ENCODE measurements at regions of chr11 and their contacts with region 1.

Region 1: GRCh38 chr11:117107701-117108590 is 9.7 kb upstream of the SIK3 start:
- DNase-seq: no peak
- ATAC-seq: no peak
- H3K4me3 Mint-ChIP-seq: no peak overlapping the region
- H3K27ac Mint-ChIP-seq: no peak overlapping the region
- H3K4me1 Mint-ChIP-seq: peaks cover 5% of the 10 kb centered on the region
- H3K27me3 Mint-ChIP-seq: peaks cover 2% of the 10 kb centered on the region

Region 2: GRCh38 chr11:116853461-116854073 is 254.4 kb before region 1 on chr11:
- CTCF ChIA-PET with region 1: interaction called, 11 read pairs
- POLR2A ChIA-PET with region 1: no interaction called
- DNase-seq: peak; percentile 83
- ATAC-seq: peak; percentile 95
- H3K4me3 Mint-ChIP-seq: peak overlapping the region; percentile 35
- H3K27ac Mint-ChIP-seq: peak overlapping the region; percentile 93
- H3K4me1 Mint-ChIP-seq: peaks cover 65% of the 10 kb centered on the region
- H3K27me3 Mint-ChIP-seq: no peaks in the 10 kb centered on the region

Region 3: GRCh38 chr11:116890193-116890592 is 217.8 kb before region 1 on chr11:
- CTCF ChIA-PET with region 1: interaction called, 13 read pairs
- POLR2A ChIA-PET with region 1: no interaction called
- DNase-seq: peak; percentile 47
- ATAC-seq: peak; percentile 74
- H3K4me3 Mint-ChIP-seq: no peak overlapping the region
- H3K27ac Mint-ChIP-seq: peak overlapping the region; percentile 69
- H3K4me1 Mint-ChIP-seq: peaks cover 16% of the 10 kb centered on the region
- H3K27me3 Mint-ChIP-seq: no peaks in the 10 kb centered on the region

Region 4: DNA sequence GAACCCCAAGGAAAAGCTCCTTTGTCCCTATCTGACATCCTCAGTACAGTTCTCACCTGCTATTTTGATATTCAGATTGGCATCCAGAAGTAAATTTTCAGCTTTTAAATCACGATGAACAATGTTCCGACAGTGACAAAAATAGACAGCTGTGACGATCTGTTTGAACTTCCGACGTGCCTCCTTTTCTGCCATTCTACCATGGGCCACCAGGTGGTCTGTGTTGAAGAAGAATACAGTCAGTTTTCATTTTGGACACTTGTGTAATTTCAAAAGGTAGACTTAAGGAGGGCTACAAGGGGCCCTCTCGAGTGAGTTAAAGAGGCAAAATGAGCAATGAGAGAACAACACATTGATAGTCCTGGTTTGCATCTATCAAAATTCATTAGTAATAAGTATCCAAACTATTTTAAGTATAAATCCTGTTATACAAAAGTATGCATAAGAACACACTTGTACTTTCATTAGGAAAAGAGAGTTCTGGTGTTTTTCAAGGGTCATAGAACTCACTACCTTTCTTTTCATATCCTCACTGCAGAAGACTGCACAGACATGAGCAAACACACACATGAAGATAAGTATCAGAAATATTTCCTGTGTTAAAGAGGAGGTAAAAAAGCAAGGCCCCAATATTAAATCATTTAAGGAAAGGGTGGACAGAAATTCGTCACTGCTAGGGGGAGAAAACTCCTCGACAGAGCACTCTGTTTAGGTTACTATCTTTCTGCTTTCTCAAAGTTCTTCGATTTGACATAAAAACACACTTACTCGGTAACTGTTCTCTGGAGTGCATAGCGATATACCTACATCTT is 180.6 kb before region 1 on chr11:
- CTCF ChIA-PET with region 1: interaction called, 12 read pairs
- POLR2A ChIA-PET with region 1: no interaction called
- DNase-seq: peak; percentile 66
- ATAC-seq: peak; percentile 28
- H3K4me3 Mint-ChIP-seq: peak overlapping the region; percentile 48
- H3K27ac Mint-ChIP-seq: peak overlapping the region; percentile 73
- H3K4me1 Mint-ChIP-seq: peaks cover 82% of the 10 kb centered on the region
- H3K27me3 Mint-ChIP-seq: no peaks in the 10 kb centered on the region

Region 5: DNA sequence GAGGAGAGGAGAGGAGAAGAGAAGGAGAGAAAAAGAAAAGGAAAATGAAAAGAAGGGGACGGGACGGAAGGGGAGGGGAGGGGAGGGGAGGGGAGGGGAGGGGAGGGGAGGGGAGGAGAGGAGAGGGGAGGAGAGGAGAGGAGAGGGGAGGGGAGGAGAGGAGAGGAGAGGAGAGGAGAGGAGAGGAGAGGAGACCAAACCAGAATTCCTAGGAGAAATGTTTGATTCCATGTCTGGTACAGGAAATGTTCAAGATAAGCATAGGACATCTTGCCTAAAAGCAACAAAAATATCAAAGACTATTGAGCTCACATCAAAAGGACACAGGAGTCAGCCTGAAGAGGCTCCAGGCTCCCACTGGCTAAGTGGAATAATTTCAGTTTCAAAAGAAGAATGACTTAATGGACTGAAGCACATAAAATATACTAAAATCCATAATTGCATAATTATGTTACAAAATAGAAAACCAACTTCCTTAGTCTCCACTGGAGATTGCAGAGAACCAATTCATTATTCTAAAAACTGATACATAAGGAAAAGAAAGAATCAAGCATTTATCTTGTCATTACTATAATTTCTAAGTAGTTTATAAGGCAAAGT is 169.4 kb before region 1 on chr11:
- CTCF ChIA-PET with region 1: no interaction called
- POLR2A ChIA-PET with region 1: no interaction called
- DNase-seq: no peak
- ATAC-seq: no peak
- H3K4me3 Mint-ChIP-seq: no peak overlapping the region
- H3K27ac Mint-ChIP-seq: no peak overlapping the region
- H3K4me1 Mint-ChIP-seq: no peaks in the 10 kb centered on the region
- H3K27me3 Mint-ChIP-seq: no peaks in the 10 kb centered on the region

Region 6: GRCh38 chr11:117226388-117227385 is 118.7 kb after region 1 on chr11:
- CTCF ChIA-PET with region 1: interaction called, 11 read pairs
- POLR2A ChIA-PET with region 1: no interaction called
- DNase-seq: peak; percentile 64
- ATAC-seq: peak; percentile 55
- H3K4me3 Mint-ChIP-seq: no peak overlapping the region
- H3K27ac Mint-ChIP-seq: peak overlapping the region; percentile 20
- H3K4me1 Mint-ChIP-seq: peaks cover 37% of the 10 kb centered on the region
- H3K27me3 Mint-ChIP-seq: no peaks in the 10 kb centered on the region